CD4-positive, alpha-beta T cell (primary cell): ENCODE measurements at regions of chr17 and their contacts with region 1.

Region 1: DNA sequence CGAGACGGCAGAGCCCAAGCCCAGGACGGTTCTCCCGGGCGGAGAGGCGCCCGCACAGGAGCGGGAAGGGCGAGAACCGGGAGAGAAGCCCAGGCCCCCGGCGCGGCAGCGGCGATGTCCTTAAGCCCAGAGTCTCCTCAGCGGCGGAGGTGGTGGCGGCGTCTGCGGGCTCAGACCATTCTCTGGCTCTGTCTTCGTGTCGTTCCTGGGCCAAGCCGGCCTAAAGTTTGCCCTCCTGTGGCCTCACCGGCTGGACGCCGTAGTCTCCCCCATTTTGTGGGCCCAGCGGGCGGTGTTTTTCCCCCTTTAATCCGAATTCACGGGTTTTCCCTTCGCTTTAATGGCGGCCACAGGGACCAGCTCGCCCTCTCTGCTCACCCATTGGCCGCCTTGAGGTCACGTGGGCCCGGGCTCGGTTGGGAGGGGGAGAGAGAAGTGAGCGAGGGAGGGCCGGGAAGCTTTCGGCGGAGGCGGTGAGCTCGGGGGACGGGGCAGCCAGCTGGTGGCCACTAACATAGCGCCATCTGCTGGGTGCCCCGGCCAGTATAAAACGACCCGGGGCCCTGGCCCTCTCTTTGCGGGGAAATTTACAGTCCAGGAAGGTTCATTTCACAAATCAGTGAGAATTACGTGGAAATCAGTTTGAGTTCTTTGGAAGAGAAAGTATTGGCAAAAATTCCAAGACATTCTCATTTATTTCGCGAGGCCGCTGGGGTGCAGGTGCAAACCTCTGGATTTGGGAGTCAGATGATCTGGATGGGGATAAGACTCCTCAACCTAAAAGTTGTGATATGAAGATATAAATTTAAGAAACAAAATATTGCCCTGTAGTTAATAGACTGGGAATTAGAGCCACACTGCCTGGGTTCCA is 755 bp upstream of the MED13 start:
- DNase-seq: peak; percentile 95 to 99 (median 98)
- ATAC-seq: peak; percentile 95
- H3K4me3 ChIP-seq: peak overlapping the region; percentile 100
- H3K4me3 Mint-ChIP-seq: peak overlapping the region; percentile 100
- H3K27ac ChIP-seq: peak overlapping the region; percentile 99
- H3K27ac Mint-ChIP-seq: peak overlapping the region; percentile 97
- H3K4me1 ChIP-seq: peaks cover 9% of the 10 kb centered on the region
- H3K4me1 Mint-ChIP-seq: peaks cover 39% of the 10 kb centered on the region
- H3K27me3 ChIP-seq: no peaks in the 10 kb centered on the region
- H3K27me3 Mint-ChIP-seq: no peaks in the 10 kb centered on the region
- CTCF ChIP-seq: peak; percentile 91

Region 2: GRCh38 chr17:60077672-60078519 is 1987.9 kb before region 1 on chr17:
- CTCF ChIA-PET with region 1: no interaction called
- POLR2A ChIA-PET with region 1: no interaction called
- intact Hi-C with region 1: loop called in 1 of 2 experiments (anchors 10 kb)
- DNase-seq: peak in 6 of 14 experiments; percentile 1 to 53 (median 20)
- ATAC-seq: peak; percentile 67
- H3K4me3 ChIP-seq: peak overlapping the region; percentile 69
- H3K4me3 Mint-ChIP-seq: peak overlapping the region; percentile 90
- H3K27ac ChIP-seq: peak overlapping the region; percentile 56 to 58
- H3K27ac Mint-ChIP-seq: peak overlapping the region; percentile 83
- H3K4me1 ChIP-seq: peaks cover 15% of the 10 kb centered on the region
- H3K4me1 Mint-ChIP-seq: peaks cover 22% of the 10 kb centered on the region
- H3K27me3 ChIP-seq: no peaks in the 10 kb centered on the region
- H3K27me3 Mint-ChIP-seq: no peaks in the 10 kb centered on the region
- CTCF ChIP-seq: no peak

Region 3: DNA sequence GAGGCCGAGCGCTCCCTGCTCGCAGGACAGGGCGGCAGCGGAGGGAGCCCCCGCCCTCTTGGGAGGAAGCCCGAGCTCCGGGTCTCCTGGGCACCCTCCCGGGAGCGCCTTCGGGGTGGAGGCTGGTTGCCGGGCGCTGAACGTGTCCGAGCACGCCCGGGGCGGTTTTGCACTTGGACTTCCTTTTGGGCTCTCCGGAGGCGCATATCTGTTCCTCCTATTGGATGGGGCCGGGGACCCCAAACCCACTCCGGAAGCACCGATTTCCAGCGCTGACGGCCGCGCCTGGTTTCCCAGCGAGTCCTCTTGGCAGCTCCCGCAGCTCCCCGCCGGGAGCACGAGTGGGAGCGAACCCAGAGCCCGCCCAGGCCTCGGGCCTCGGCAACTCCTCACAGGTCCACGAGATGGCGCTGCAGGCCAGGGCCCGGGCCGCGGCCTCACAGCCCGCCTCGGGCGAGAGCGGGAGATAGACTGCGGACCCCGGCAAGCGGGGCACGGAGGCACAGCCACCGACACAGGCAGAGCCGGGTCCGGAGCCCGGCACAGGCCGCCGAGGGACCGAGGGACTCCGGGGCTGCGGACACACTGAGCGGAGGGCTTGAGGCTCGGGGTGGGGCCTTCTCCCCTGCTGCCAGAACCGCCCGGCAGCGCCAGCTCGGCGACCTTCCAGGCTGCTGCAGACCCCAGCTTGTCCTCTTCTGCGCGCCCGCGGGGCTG is 653.5 kb before region 1 on chr17:
- CTCF ChIA-PET with region 1: interaction called, 3 read pairs
- POLR2A ChIA-PET with region 1: interaction called, 4 read pairs
- intact Hi-C with region 1: loop called (anchors 2 to 10 kb)
- DNase-seq: peak; percentile 43 to 89 (median 74)
- ATAC-seq: peak; percentile 81
- H3K4me3 ChIP-seq: peak overlapping the region; percentile 66
- H3K4me3 Mint-ChIP-seq: peak overlapping the region; percentile 58
- H3K27ac ChIP-seq: no peak overlapping the region
- H3K27ac Mint-ChIP-seq: no peak overlapping the region
- H3K4me1 ChIP-seq: peaks cover 67% of the 10 kb centered on the region
- H3K4me1 Mint-ChIP-seq: peaks cover 25% of the 10 kb centered on the region
- H3K27me3 ChIP-seq: peaks cover 36 to 39% of the 10 kb centered on the region in 2 experiments
- H3K27me3 Mint-ChIP-seq: peaks cover 50% of the 10 kb centered on the region
- CTCF ChIP-seq: peak; percentile 98

Region 4: GRCh38 chr17:61862975-61863800 is 202.6 kb before region 1 on chr17 and contains the start of gene BRIP1:
- CTCF ChIA-PET with region 1: interaction called, 5 read pairs
- POLR2A ChIA-PET with region 1: interaction called, 8 read pairs
- intact Hi-C with region 1: loop called in 1 of 2 experiments (anchors 5 kb)
- DNase-seq: peak; percentile 73 to 94 (median 81)
- ATAC-seq: peak; percentile 96
- H3K4me3 ChIP-seq: peak within 1 kb of the TSS; percentile 77
- H3K4me3 Mint-ChIP-seq: peak within 1 kb of the TSS; percentile 90
- H3K27ac ChIP-seq: peak within 1 kb of the TSS; percentile 39 to 59
- H3K27ac Mint-ChIP-seq: peak within 1 kb of the TSS; percentile 87
- H3K4me1 ChIP-seq: peaks cover 8% of the 10 kb centered on the region
- H3K4me1 Mint-ChIP-seq: peaks cover 31% of the 10 kb centered on the region
- H3K27me3 ChIP-seq: no peaks in the 10 kb centered on the region
- H3K27me3 Mint-ChIP-seq: no peaks in the 10 kb centered on the region
- CTCF ChIP-seq: no peak
- total RNA-seq, gene BRIP1: 1.0 to 1.9 TPM

Region 5: GRCh38 chr17:62052757-62053338 is 13.0 kb before region 1 on chr17:
- CTCF ChIA-PET with region 1: interaction called, 11 read pairs
- POLR2A ChIA-PET with region 1: interaction called, 5 read pairs
- intact Hi-C with region 1: no loop called
- DNase-seq: no peak
- ATAC-seq: no peak
- H3K4me3 ChIP-seq: no peak overlapping the region
- H3K4me3 Mint-ChIP-seq: no peak overlapping the region
- H3K27ac ChIP-seq: no peak overlapping the region
- H3K27ac Mint-ChIP-seq: peak overlapping the region; percentile 51
- H3K4me1 ChIP-seq: peaks cover 10% of the 10 kb centered on the region
- H3K4me1 Mint-ChIP-seq: peaks cover 73% of the 10 kb centered on the region
- H3K27me3 ChIP-seq: no peaks in the 10 kb centered on the region
- H3K27me3 Mint-ChIP-seq: no peaks in the 10 kb centered on the region
- CTCF ChIP-seq: no peak